ENCODE measurements at regions of chr14 and their contacts with region 1.

Region 1: GRCh38 chr14:105180592-105181548 is at the start of gene NUDT14:
- DNase-seq: peak; percentile 93
- ATAC-seq: peak; percentile 90
- H3K4me3 Mint-ChIP-seq: peak within 1 kb of the TSS; percentile 69
- H3K27ac Mint-ChIP-seq: no peak within 1 kb of the TSS
- H3K4me1 Mint-ChIP-seq: peaks cover 10% of the 10 kb centered on the region
- H3K27me3 Mint-ChIP-seq: no peaks in the 10 kb centered on the region
- total RNA-seq, gene NUDT14: 12.3 to 13.5 TPM

Region 2: GRCh38 chr14:104759001-104759969 is 421.6 kb before region 1 on chr14:
- CTCF ChIA-PET with region 1: no interaction called
- POLR2A ChIA-PET with region 1: no interaction called
- intact Hi-C with region 1: no loop called
- DNase-seq: no peak
- ATAC-seq: no peak
- H3K4me3 Mint-ChIP-seq: no peak overlapping the region
- H3K27ac Mint-ChIP-seq: no peak overlapping the region
- H3K4me1 Mint-ChIP-seq: peaks cover 25% of the 10 kb centered on the region
- H3K27me3 Mint-ChIP-seq: no peaks in the 10 kb centered on the region

Region 3: GRCh38 chr14:104865644-104866441 is 315.0 kb before region 1 on chr14:
- CTCF ChIA-PET with region 1: no interaction called
- POLR2A ChIA-PET with region 1: no interaction called
- intact Hi-C with region 1: loop called in 1 of 2 experiments (anchors 1 kb)
- DNase-seq: peak; percentile 62
- ATAC-seq: peak; percentile 57
- H3K4me3 Mint-ChIP-seq: peak overlapping the region; percentile 60
- H3K27ac Mint-ChIP-seq: no peak overlapping the region
- H3K4me1 Mint-ChIP-seq: peaks cover 2% of the 10 kb centered on the region
- H3K27me3 Mint-ChIP-seq: peaks cover 7% of the 10 kb centered on the region

Region 4: GRCh38 chr14:104976198-104977007 is 204.5 kb before region 1 on chr14:
- CTCF ChIA-PET with region 1: no interaction called
- POLR2A ChIA-PET with region 1: no interaction called
- intact Hi-C with region 1: loop called in 1 of 2 experiments (anchors 5 kb)
- DNase-seq: peak; percentile 92
- ATAC-seq: peak; percentile 86
- H3K4me3 Mint-ChIP-seq: peak overlapping the region; percentile 19
- H3K27ac Mint-ChIP-seq: no peak overlapping the region
- H3K4me1 Mint-ChIP-seq: peaks cover 6% of the 10 kb centered on the region
- H3K27me3 Mint-ChIP-seq: peaks cover 16% of the 10 kb centered on the region

Region 5: GRCh38 chr14:105065280-105066228 is 115.3 kb before region 1 on chr14 and contains the start of gene GPR132:
- CTCF ChIA-PET with region 1: no interaction called
- POLR2A ChIA-PET with region 1: no interaction called
- intact Hi-C with region 1: loop called in 1 of 2 experiments (anchors 1 kb)
- DNase-seq: peak; percentile 93
- ATAC-seq: peak; percentile 78
- H3K4me3 Mint-ChIP-seq: peak within 1 kb of the TSS; percentile 92
- H3K27ac Mint-ChIP-seq: peak within 1 kb of the TSS; percentile 96
- H3K4me1 Mint-ChIP-seq: peaks cover 74% of the 10 kb centered on the region
- H3K27me3 Mint-ChIP-seq: no peaks in the 10 kb centered on the region
- total RNA-seq, gene GPR132: 27.7 to 35.4 TPM

Region 6: GRCh38 chr14:105093431-105094192 is 87.3 kb before region 1 on chr14:
- CTCF ChIA-PET with region 1: no interaction called
- POLR2A ChIA-PET with region 1: no interaction called
- intact Hi-C with region 1: loop called (anchors 1 to 5 kb)
- DNase-seq: peak; percentile 88
- ATAC-seq: peak; percentile 71
- H3K4me3 Mint-ChIP-seq: peak overlapping the region; percentile 65
- H3K27ac Mint-ChIP-seq: peak overlapping the region; percentile 31
- H3K4me1 Mint-ChIP-seq: peaks cover 5% of the 10 kb centered on the region
- H3K27me3 Mint-ChIP-seq: no peaks in the 10 kb centered on the region

Region 7: GRCh38 chr14:105314287-105315200 is 133.7 kb after region 1 on chr14 and contains the start of gene PACS2:
- CTCF ChIA-PET with region 1: no interaction called
- POLR2A ChIA-PET with region 1: no interaction called
- intact Hi-C with region 1: loop called in 1 of 2 experiments (anchors 1 kb)
- DNase-seq: peak; percentile 86
- ATAC-seq: peak; percentile 79
- H3K4me3 Mint-ChIP-seq: peak within 1 kb of the TSS; percentile 84
- H3K27ac Mint-ChIP-seq: peak within 1 kb of the TSS; percentile 71
- H3K4me1 Mint-ChIP-seq: peaks cover 30% of the 10 kb centered on the region
- H3K27me3 Mint-ChIP-seq: no peaks in the 10 kb centered on the region
- total RNA-seq, gene PACS2: 30.6 to 32.9 TPM

Region 8: DNA sequence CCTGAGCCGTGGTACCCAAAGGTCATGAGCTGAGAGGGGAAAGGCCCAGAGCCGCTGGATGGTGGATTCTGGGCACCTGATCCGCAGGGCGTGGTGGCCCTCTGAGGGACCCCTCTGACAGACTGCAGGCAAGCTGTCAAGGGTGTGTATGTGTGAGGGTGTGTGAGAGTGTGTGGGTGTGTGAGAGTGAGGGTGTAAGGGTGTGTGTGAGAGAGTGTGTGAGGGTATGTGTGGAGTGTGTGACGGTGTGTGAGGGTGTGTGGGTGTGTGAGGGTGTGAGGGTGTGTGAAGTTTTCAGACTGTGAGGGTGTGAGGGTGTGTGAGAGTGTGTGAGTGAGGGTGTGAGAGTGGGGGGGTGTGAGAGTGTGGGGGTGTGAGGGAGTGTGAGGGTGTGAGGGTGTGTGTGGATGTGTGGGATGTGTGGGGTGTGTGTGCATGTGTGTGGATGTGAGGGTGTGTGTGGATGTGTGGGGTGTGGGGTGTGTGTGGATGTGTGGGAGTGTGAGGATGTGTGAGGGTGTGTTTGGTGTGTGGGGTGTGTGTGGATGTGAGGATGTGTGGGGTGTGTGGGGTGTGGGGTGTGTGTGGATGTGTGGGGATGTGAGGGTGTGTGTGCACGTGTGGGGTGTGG is 502.2 kb after region 1 on chr14:
- CTCF ChIA-PET with region 1: no interaction called
- POLR2A ChIA-PET with region 1: no interaction called
- intact Hi-C with region 1: no loop called
- DNase-seq: no peak
- ATAC-seq: no peak
- H3K4me3 Mint-ChIP-seq: no peak overlapping the region
- H3K27ac Mint-ChIP-seq: no peak overlapping the region
- H3K4me1 Mint-ChIP-seq: peaks cover 2% of the 10 kb centered on the region
- H3K27me3 Mint-ChIP-seq: peaks cover 3% of the 10 kb centered on the region

Region 9: GRCh38 chr14:106622200-106622745 is 1441.4 kb after region 1 on chr14:
- CTCF ChIA-PET with region 1: no interaction called
- POLR2A ChIA-PET with region 1: no interaction called
- intact Hi-C with region 1: no loop called
- DNase-seq: peak; percentile 52
- ATAC-seq: peak; percentile 27
- H3K4me3 Mint-ChIP-seq: no peak overlapping the region
- H3K27ac Mint-ChIP-seq: no peak overlapping the region
- H3K4me1 Mint-ChIP-seq: peaks cover 13% of the 10 kb centered on the region
- H3K27me3 Mint-ChIP-seq: peaks cover 24% of the 10 kb centered on the region

Measured in activated CD4-positive, alpha-beta T cell treated with anti-CD3 and anti-CD28 coated beads for 36 hours (primary cell).